PC-9 (cell line): ENCODE measurements at regions of chr11 and their contacts with region 1.

Region 1: GRCh38 chr11:36258730-36259360 is 30.4 kb downstream of the COMMD9 start:
- DNase-seq: peak; percentile 35 to 44
- H3K4me3 ChIP-seq: no peak overlapping the region
- H3K27ac ChIP-seq: no peak overlapping the region
- H3K4me1 ChIP-seq: peaks cover 16% of the 10 kb centered on the region
- H3K27me3 ChIP-seq: no peaks in the 10 kb centered on the region
- CTCF ChIP-seq: peak; percentile 71

Region 2: GRCh38 chr11:36056160-36056751 is 202.6 kb before region 1 on chr11:
- CTCF ChIA-PET with region 1: no interaction called
- POLR2A ChIA-PET with region 1: no interaction called
- intact Hi-C with region 1: loop called (anchors 5 kb)
- DNase-seq: peak; percentile 42 to 46
- H3K4me3 ChIP-seq: no peak overlapping the region
- H3K27ac ChIP-seq: no peak overlapping the region
- H3K4me1 ChIP-seq: no peaks in the 10 kb centered on the region
- H3K27me3 ChIP-seq: no peaks in the 10 kb centered on the region
- CTCF ChIP-seq: peak; percentile 79

Region 3: GRCh38 chr11:36123346-36124101 is 135.3 kb before region 1 on chr11:
- CTCF ChIA-PET with region 1: no interaction called
- POLR2A ChIA-PET with region 1: no interaction called
- intact Hi-C with region 1: no loop called
- DNase-seq: no peak
- H3K4me3 ChIP-seq: no peak overlapping the region
- H3K27ac ChIP-seq: no peak overlapping the region
- H3K4me1 ChIP-seq: no peaks in the 10 kb centered on the region
- H3K27me3 ChIP-seq: no peaks in the 10 kb centered on the region
- CTCF ChIP-seq: no peak

Region 4: GRCh38 chr11:36509694-36510566 is 251.1 kb after region 1 on chr11 and contains the start of gene TRAF6:
- CTCF ChIA-PET with region 1: no interaction called
- POLR2A ChIA-PET with region 1: no interaction called
- intact Hi-C with region 1: no loop called
- DNase-seq: peak; percentile 70 to 90
- H3K4me3 ChIP-seq: peak within 1 kb of the TSS; percentile 94
- H3K27ac ChIP-seq: peak within 1 kb of the TSS; percentile 74
- H3K4me1 ChIP-seq: peaks cover 14% of the 10 kb centered on the region
- H3K27me3 ChIP-seq: peaks cover under 1% of the 10 kb centered on the region; the same call in 1 of the 2 replicates
- CTCF ChIP-seq: peak; percentile 96
- total RNA-seq, gene TRAF6: 8.0 and 9.2 TPM in 2 replicates